GM13976 (cell line): ENCODE measurements at regions of chr11 and their contacts with region 1.

Region 1: DNA sequence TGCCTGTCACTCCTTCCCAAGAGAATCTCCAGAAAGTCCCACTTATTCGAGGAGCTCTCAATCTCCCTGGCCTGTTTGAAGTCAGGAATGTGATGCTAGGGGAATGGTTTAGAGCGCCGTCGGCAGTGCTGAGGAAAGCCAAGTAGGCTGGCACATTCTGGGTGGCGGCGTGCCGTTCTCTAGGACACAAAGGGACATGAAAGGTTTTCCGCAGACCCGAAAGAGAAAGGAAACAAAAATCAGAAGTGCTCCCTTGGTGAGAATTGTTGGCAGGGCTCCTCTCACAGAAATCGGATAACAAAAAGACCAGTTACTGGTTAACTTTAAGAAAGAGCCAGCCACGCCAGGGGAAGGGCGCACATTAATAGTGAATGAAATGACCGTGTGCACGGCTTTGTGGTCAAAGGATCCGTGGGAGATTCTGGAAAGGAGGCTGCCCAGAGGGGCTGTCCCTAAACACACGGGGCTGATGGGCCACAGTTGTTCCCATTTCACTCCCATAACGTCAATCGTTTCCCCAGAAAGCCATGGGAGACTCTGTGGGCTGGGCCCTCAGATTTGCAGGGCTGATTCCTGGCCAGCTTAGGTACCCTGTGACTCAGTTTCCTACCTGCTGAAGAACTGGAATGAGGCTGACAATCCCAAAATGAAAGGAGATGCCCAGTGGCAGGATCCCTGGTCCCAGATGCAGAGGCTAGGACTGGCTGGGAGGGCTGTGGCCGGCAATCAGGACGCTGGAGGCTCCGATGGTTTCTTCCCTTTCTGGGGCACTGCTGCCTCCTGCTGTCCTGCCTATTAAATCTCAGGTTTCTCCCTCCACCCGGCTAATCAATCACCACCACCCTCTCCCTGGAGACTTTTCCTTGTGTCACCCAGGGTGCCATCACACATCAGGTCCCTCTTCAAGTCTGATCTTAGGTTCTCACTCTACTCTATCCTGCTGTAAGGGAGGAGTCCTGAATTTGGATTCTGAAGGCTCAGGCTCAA is 82.3 kb downstream of the RCN1 start:
- DNase-seq: peak; percentile 60
- CTCF ChIP-seq: no peak

Region 2: GRCh38 chr11:31397239-31397834 is 775.8 kb before region 1 on chr11:
- in situ Hi-C with region 1: loop called (anchors 25 kb)
- DNase-seq: peak; percentile 31
- CTCF ChIP-seq: peak; percentile 23

Region 3: GRCh38 chr11:32052218-32052617 is 120.9 kb before region 1 on chr11:
- in situ Hi-C with region 1: loop called (anchors 5 kb)
- DNase-seq: peak; percentile 46
- CTCF ChIP-seq: peak; percentile 61